Endothelial cell of umbilical vein (primary cell): ENCODE measurements at regions of chr7 and their contacts with region 1.

Region 1: DNA sequence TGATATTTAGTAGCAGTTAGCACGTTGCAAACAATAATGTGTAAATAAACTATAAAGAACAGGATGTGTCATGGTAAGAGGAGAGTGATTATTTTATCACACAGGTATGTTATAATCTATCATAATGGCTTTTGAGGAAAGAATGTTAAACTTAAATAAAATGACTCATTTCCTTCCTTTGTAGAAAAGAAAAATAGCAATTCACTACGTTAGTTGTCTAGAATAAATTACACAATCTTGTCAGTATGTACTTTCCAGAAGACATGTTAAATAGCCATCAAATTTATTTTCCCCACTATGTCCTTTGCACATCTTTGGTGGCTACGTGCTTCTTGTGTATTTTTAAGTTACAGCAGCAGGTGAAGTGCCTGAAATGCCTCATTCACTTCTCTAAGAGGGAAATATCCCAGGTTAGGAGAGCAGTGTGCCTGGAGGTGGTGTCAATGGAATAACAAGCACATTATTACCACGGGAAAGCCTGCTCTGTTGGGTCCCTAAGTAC is 133.8 kb downstream of the SEMA3A start:
- DNase-seq: peak; percentile 77
- H3K4me3 ChIP-seq: peak overlapping the region in 1 of 3 experiments; percentile 32
- H3K27ac ChIP-seq: peak overlapping the region; percentile 89
- H3K4me1 ChIP-seq: peaks cover 24% of the 10 kb centered on the region
- H3K27me3 ChIP-seq: no peaks in the 10 kb centered on the region
- CTCF ChIP-seq: no peak
- POLR2A ChIP-seq: no peak

Region 2: GRCh38 chr7:84025332-84025927 is 35.4 kb before region 1 on chr7:
- CTCF ChIA-PET with region 1: no interaction called
- POLR2A ChIA-PET with region 1: no interaction called
- dilution Hi-C with region 1: no loop called
- intact Hi-C with region 1: loop called (anchors 1 kb)
- DNase-seq: peak; percentile 95
- H3K4me3 ChIP-seq: no peak overlapping the region
- H3K27ac ChIP-seq: peak overlapping the region; percentile 65
- H3K4me1 ChIP-seq: peaks cover 15% of the 10 kb centered on the region
- H3K27me3 ChIP-seq: no peaks in the 10 kb centered on the region
- CTCF ChIP-seq: no peak
- POLR2A ChIP-seq: no peak

Region 3: GRCh38 chr7:84176716-84177115 is 115.9 kb after region 1 on chr7:
- CTCF ChIA-PET with region 1: no interaction called
- POLR2A ChIA-PET with region 1: no interaction called
- dilution Hi-C with region 1: no loop called
- intact Hi-C with region 1: no loop called
- DNase-seq: no peak
- H3K4me3 ChIP-seq: no peak overlapping the region
- H3K27ac ChIP-seq: no peak overlapping the region
- H3K4me1 ChIP-seq: no peaks in the 10 kb centered on the region
- H3K27me3 ChIP-seq: no peaks in the 10 kb centered on the region
- CTCF ChIP-seq: no peak
- POLR2A ChIP-seq: no peak

Region 4: GRCh38 chr7:84331616-84332015 is 270.8 kb after region 1 on chr7:
- CTCF ChIA-PET with region 1: no interaction called
- POLR2A ChIA-PET with region 1: no interaction called
- dilution Hi-C with region 1: no loop called
- intact Hi-C with region 1: no loop called
- DNase-seq: no peak
- H3K4me3 ChIP-seq: no peak overlapping the region
- H3K27ac ChIP-seq: no peak overlapping the region
- H3K4me1 ChIP-seq: peaks cover 2% of the 10 kb centered on the region
- H3K27me3 ChIP-seq: no peaks in the 10 kb centered on the region
- CTCF ChIP-seq: no peak
- POLR2A ChIP-seq: no peak

Region 5: GRCh38 chr7:84529480-84530205 is 468.8 kb after region 1 on chr7:
- CTCF ChIA-PET with region 1: no interaction called
- POLR2A ChIA-PET with region 1: no interaction called
- dilution Hi-C with region 1: no loop called
- intact Hi-C with region 1: no loop called
- DNase-seq: peak; percentile 75
- H3K4me3 ChIP-seq: no peak overlapping the region
- H3K27ac ChIP-seq: peak overlapping the region; percentile 46
- H3K4me1 ChIP-seq: peaks cover 14% of the 10 kb centered on the region
- H3K27me3 ChIP-seq: no peaks in the 10 kb centered on the region
- CTCF ChIP-seq: no peak
- POLR2A ChIP-seq: no peak